ENCODE measurements at regions of chr3 and their contacts with region 1.

Region 1: DNA sequence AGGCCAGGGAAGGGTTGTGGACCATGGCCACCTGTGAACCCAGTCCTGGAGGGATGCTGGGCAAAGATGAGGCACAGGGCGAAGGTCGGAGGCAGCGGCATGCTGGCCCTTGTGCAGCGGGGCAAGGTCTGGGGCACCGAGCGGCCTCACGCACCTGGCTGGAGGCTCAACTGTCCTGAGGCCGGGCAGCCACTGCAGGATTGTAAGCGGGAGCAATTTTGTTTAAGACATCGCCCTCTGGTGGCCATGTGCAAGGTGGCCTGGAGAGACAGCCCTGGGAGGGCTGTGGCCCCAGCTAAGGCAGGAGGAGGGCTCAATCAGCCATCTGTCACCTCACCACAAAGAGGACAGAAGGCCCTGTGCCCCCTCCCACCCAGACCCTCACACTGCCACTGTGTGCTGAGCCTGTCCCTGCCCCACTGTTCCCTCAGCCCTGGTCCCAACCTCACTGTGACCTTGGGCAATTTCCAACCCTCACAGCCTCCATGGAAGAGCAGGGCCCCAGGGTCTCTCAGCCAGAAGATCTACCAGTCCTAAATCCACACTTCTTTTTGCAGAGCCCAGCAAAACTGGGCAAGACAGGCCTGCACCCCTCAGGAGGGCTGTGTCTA is 46.2 kb downstream of the TPRA1 start:
- DNase-seq: peak; percentile 72
- H3K4me3 ChIP-seq: no peak overlapping the region
- H3K27ac ChIP-seq: no peak overlapping the region
- H3K4me1 ChIP-seq: peaks cover 13% of the 10 kb centered on the region
- H3K27me3 ChIP-seq: no peaks in the 10 kb centered on the region
- CTCF ChIP-seq: peak; percentile 62 to 81 (median 73)
- POLR2A ChIP-seq: no peak

Region 2: GRCh38 chr3:126522363-126522788 is 1021.9 kb before region 1 on chr3:
- intact Hi-C with region 1: loop called (anchors 5 kb)
- DNase-seq: peak; percentile 31
- H3K4me3 ChIP-seq: no peak overlapping the region
- H3K27ac ChIP-seq: no peak overlapping the region
- H3K4me1 ChIP-seq: no peaks in the 10 kb centered on the region
- H3K27me3 ChIP-seq: peaks cover 6% of the 10 kb centered on the region
- CTCF ChIP-seq: peak; percentile 79 to 94 (median 88)
- POLR2A ChIP-seq: no peak

Region 3: DNA sequence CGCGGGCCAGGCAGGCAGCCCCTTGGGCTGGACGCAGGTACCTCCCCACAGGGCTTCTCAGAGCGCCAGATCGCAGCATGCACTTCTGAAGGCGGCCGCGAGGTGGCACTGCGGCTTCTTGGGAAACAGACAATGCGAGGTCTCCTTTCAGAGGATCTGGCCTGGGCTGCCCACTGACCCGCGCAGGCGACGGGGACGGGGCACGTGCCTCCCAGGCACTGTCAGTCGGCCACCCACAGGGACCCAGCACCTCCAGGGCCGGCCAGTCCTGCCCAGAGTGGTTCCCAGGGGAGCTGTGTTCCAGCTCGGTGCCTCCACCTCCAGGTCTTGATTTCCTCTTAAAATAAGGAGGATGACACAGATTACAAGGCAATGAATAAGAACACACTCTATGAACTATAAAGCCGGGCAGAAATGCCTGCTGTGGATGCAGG is 865.0 kb before region 1 on chr3:
- intact Hi-C with region 1: loop called (anchors 2 kb)
- DNase-seq: peak; percentile 73
- H3K4me3 ChIP-seq: no peak overlapping the region
- H3K27ac ChIP-seq: no peak overlapping the region
- H3K4me1 ChIP-seq: peaks cover 5% of the 10 kb centered on the region
- H3K27me3 ChIP-seq: peaks cover 5% of the 10 kb centered on the region
- CTCF ChIP-seq: peak; percentile 90 to 94 (median 93)
- POLR2A ChIP-seq: no peak

Region 4: GRCh38 chr3:126752303-126752842 is 791.9 kb before region 1 on chr3:
- intact Hi-C with region 1: loop called (anchors 5 kb)
- DNase-seq: peak; percentile 74
- H3K4me3 ChIP-seq: no peak overlapping the region
- H3K27ac ChIP-seq: peak overlapping the region; percentile 58 to 61
- H3K4me1 ChIP-seq: no peaks in the 10 kb centered on the region
- H3K27me3 ChIP-seq: no peaks in the 10 kb centered on the region
- CTCF ChIP-seq: peak; percentile 43 to 91 (median 84)
- POLR2A ChIP-seq: no peak

Region 5: GRCh38 chr3:127848131-127849129 is 304.1 kb after region 1 on chr3:
- intact Hi-C with region 1: no loop called
- DNase-seq: no peak
- H3K4me3 ChIP-seq: no peak overlapping the region
- H3K27ac ChIP-seq: no peak overlapping the region
- H3K4me1 ChIP-seq: no peaks in the 10 kb centered on the region
- H3K27me3 ChIP-seq: no peaks in the 10 kb centered on the region
- CTCF ChIP-seq: no peak
- POLR2A ChIP-seq: no peak